Stomach (tissue), 19 donors: ENCODE measurements at regions of chr4 and their contacts with region 1.

Region 1: DNA sequence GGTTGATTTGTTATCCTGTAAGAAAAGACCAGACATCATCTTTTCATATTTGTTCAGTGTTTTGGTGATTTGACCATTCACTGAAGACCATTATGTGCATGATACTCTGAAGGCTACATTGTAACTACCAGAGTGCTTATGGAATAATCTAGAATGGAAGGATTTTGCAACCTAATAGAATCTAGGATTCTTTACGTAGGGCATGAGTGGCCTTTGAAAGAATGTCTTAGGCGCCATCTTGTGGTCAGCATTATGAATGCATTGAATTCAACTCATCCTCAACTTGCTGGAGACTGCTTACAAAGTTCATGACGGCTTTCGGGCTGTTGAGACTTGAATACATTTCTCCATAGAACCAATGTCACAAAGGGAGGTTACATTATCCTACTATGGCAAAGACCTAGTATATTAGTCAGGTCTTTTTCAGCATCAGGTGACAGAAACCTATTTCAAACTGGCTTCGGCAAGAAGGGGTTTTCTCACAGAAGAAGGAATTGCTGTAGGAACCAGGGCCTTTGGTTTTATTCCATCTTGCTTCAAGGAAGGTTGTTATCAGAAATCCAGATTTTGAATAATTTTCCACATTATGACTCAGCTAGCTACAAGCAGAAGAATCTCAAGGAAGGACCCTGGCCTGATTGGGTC is 104.1 kb downstream of the GPAT3 start:
- DNase-seq: peak; percentile 56 to 91
- H3K4me3 ChIP-seq: no peak overlapping the region
- H3K27ac ChIP-seq: no peak overlapping the region
- H3K4me1 ChIP-seq: peaks cover 0 to 3% (median 0%) of the 10 kb centered on the region in 4 donors
- H3K27me3 ChIP-seq: peaks cover 0 to 9% (median 0%) of the 10 kb centered on the region in 3 donors
- CTCF ChIP-seq: peak in 5 of 7 experiments; percentile 69 to 87 (median 80)
- EP300 ChIP-seq: no peak
- POLR2A ChIP-seq: no peak

Region 2: DNA sequence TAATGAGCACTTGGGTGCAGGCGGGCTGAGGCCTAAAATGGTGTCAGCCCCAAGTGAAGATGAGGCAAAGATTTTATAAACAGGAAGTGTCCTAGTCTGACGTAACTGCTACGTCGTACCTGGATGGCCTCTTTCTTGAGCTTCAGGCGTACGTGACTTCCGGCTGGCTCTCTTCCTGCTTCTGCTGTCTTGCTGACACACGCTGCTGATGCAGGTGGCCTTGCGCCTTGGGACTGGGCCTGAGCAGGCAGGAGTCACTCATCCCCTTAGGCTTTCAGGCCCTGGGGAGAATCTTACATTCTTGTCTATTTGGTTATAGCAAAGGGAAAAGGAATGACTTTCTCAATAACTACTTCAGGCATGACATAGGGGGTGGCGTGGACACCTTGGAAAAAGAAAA is 135.0 kb before region 1 on chr4:
- intact Hi-C with region 1: loop called (anchors 5 kb)
- DNase-seq: no peak
- H3K4me3 ChIP-seq: no peak overlapping the region
- H3K27ac ChIP-seq: no peak overlapping the region
- H3K4me1 ChIP-seq: no peaks in the 10 kb centered on the region
- H3K27me3 ChIP-seq: no peaks in the 10 kb centered on the region
- CTCF ChIP-seq: no peak
- EP300 ChIP-seq: no peak
- POLR2A ChIP-seq: no peak